ENCODE measurements at regions of chr15 and their contacts with region 1.

Region 1: GRCh38 chr15:65824031-65824743 is 32.1 kb upstream of the DENND4A start:
- DNase-seq: peak in 1 of 2 donors; percentile 62
- ATAC-seq: peak; percentile 78 to 92 (median 86)
- H3K4me3 ChIP-seq: no peak overlapping the region
- H3K27ac ChIP-seq: no peak overlapping the region
- H3K4me1 ChIP-seq: peaks cover 0 to 55% (median 7%) of the 10 kb centered on the region in 9 donors
- H3K27me3 ChIP-seq: no peaks in the 10 kb centered on the region
- CTCF ChIP-seq: peak; percentile 34 to 74 (median 62)

Region 2: GRCh38 chr15:65743637-65744252 is 80.4 kb before region 1 on chr15:
- intact Hi-C with region 1: loop called in 1 of 10 experiments (anchors 10 kb)
- DNase-seq: no peak
- ATAC-seq: no peak
- H3K4me3 ChIP-seq: no peak overlapping the region
- H3K27ac ChIP-seq: no peak overlapping the region
- H3K4me1 ChIP-seq: peaks cover 0 to 6% (median 0%) of the 10 kb centered on the region in 9 donors
- H3K27me3 ChIP-seq: no peaks in the 10 kb centered on the region
- CTCF ChIP-seq: no peak

Region 3: DNA sequence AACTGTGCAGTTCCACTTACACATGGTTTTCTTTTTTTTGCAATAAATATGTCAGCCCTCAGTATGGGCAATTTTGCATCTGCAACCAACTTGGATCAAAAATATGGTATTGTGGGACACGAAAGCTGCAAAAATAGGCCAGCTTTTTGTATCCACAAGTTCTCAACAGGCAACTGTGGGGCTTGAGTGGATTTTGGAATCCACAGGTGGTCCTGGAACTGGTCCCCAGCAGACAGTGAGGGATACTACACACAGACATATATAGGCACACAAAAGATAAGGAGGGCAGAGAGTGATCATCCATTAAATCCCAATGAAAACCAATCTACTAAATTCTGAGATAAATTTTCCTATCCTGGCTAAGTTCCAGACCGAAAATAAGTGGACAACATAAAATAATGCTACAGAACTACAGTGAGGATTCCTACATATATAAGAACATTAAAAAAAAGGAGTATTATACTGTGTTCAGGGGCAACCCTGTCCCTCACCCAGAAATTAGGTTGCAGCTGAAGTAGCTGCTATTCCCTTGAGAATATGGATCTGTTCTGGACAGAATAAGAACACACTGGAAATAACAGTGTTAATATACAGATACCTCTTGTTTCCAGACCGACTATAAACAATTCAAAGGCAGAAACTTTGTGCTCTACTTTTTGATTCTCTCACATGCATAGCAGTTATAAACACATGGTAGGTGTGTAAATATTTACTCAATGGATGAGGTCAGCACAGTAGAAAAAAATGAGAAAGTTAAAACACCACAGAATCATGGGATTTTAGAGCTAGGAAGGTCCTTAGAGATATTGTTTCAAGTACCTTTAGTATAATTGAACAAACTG is 57.5 kb before region 1 on chr15:
- intact Hi-C with region 1: loop called in 1 of 10 experiments (anchors 10 kb)
- DNase-seq: no peak
- ATAC-seq: no peak
- H3K4me3 ChIP-seq: no peak overlapping the region
- H3K27ac ChIP-seq: no peak overlapping the region
- H3K4me1 ChIP-seq: peaks cover 0 to 20% (median 8%) of the 10 kb centered on the region in 9 donors
- H3K27me3 ChIP-seq: no peaks in the 10 kb centered on the region
- CTCF ChIP-seq: no peak

Measured in heart right ventricle (tissue), 16 donors.